Mammary epithelial cell (primary cell): ENCODE measurements at regions of chr6 and their contacts with region 1.

Region 1: DNA sequence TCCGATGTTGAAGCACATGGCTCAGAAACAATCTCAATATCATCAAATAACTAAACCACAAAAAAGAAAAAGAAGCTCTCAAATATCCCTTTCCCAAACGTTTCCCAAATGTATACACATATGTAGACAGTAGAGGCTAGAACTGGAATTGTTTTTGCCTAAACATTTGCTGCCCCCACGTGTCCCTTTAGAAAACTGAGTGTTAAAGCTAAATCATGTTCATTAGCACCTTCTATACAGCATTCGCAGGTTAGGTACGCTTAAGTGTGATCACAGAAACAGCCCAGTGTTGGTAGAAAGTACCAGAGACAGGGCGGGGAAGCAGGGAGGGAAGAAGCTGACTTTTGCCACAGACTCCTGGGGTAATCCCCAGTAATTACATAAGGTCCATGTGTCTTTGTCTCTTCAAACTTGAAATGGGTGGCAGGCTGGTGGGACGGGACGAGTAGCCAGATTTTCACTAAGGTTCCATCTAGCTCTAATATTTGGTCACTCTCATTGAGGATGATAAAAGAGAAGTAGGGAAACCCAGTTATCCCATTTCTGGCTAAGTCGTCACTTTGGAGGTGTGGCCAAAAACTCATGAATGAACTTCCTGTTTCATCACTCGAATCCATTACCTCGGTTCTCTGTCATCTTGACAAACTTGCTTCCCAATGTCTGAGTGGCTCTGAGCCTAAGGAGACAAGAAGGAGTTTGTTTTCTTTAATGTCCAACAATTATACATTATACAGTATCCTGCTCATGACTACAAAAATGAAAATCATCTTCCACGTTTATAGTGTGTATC is 15.0 kb upstream of the TFAP2A start:
- DNase-seq: peak; percentile 74
- H3K4me3 ChIP-seq: no peak overlapping the region
- H3K27ac ChIP-seq: peak overlapping the region; percentile 98
- H3K4me1 ChIP-seq: peaks cover 80% of the 10 kb centered on the region
- H3K27me3 ChIP-seq: no peaks in the 10 kb centered on the region
- CTCF ChIP-seq: peak; percentile 49 to 69

Region 2: GRCh38 chr6:8707956-8708772 is 1721.7 kb before region 1 on chr6:
- CTCF ChIA-PET with region 1: no interaction called
- dilution Hi-C with region 1: no loop called
- in situ Hi-C with region 1: no loop called
- intact Hi-C with region 1: loop called (anchors 10 kb)
- DNase-seq: peak; percentile 19
- H3K4me3 ChIP-seq: peak overlapping the region in 1 of 3 experiments; percentile 13
- H3K27ac ChIP-seq: no peak overlapping the region
- H3K4me1 ChIP-seq: no peaks in the 10 kb centered on the region
- H3K27me3 ChIP-seq: no peaks in the 10 kb centered on the region
- CTCF ChIP-seq: peak; percentile 17 to 48

Region 3: DNA sequence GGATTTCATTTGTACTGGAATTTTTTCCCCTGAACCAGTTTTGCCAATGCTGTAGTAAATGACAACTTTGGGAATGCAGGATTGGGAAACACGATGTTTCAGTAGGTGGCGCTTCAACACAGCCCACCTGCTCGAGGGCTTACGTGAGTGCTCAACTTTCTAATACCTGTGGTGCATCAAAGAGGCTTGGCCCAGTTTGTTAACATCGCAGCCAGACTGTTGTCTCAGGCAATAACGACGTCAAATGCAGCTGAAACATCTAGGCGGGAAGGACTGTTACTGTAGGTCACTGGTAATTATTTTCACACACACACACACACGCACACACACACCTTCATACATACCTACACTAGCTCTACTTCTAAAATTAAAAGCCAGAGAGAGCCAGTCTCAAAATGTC is 1179.0 kb before region 1 on chr6:
- CTCF ChIA-PET with region 1: no interaction called
- dilution Hi-C with region 1: no loop called
- in situ Hi-C with region 1: loop called (anchors 10 to 25 kb)
- intact Hi-C with region 1: loop called (anchors 1 kb)
- DNase-seq: peak; percentile 61
- H3K4me3 ChIP-seq: no peak overlapping the region
- H3K27ac ChIP-seq: no peak overlapping the region
- H3K4me1 ChIP-seq: no peaks in the 10 kb centered on the region
- H3K27me3 ChIP-seq: no peaks in the 10 kb centered on the region
- CTCF ChIP-seq: peak; percentile 72 to 85

Region 4: GRCh38 chr6:9851541-9852380 is 578.1 kb before region 1 on chr6:
- CTCF ChIA-PET with region 1: no interaction called
- dilution Hi-C with region 1: no loop called
- in situ Hi-C with region 1: no loop called
- intact Hi-C with region 1: loop called (anchors 5 kb)
- DNase-seq: peak; percentile 76
- H3K4me3 ChIP-seq: no peak overlapping the region
- H3K27ac ChIP-seq: peak overlapping the region; percentile 20
- H3K4me1 ChIP-seq: peaks cover 9% of the 10 kb centered on the region
- H3K27me3 ChIP-seq: no peaks in the 10 kb centered on the region
- CTCF ChIP-seq: peak; percentile 66 to 69

Region 5: GRCh38 chr6:10177703-10178102 is 252.1 kb before region 1 on chr6:
- CTCF ChIA-PET with region 1: no interaction called
- dilution Hi-C with region 1: no loop called
- in situ Hi-C with region 1: no loop called
- intact Hi-C with region 1: no loop called
- DNase-seq: peak; percentile 46
- H3K4me3 ChIP-seq: no peak overlapping the region
- H3K27ac ChIP-seq: no peak overlapping the region
- H3K4me1 ChIP-seq: peaks cover 20% of the 10 kb centered on the region
- H3K27me3 ChIP-seq: no peaks in the 10 kb centered on the region
- CTCF ChIP-seq: no peak

Region 6: DNA sequence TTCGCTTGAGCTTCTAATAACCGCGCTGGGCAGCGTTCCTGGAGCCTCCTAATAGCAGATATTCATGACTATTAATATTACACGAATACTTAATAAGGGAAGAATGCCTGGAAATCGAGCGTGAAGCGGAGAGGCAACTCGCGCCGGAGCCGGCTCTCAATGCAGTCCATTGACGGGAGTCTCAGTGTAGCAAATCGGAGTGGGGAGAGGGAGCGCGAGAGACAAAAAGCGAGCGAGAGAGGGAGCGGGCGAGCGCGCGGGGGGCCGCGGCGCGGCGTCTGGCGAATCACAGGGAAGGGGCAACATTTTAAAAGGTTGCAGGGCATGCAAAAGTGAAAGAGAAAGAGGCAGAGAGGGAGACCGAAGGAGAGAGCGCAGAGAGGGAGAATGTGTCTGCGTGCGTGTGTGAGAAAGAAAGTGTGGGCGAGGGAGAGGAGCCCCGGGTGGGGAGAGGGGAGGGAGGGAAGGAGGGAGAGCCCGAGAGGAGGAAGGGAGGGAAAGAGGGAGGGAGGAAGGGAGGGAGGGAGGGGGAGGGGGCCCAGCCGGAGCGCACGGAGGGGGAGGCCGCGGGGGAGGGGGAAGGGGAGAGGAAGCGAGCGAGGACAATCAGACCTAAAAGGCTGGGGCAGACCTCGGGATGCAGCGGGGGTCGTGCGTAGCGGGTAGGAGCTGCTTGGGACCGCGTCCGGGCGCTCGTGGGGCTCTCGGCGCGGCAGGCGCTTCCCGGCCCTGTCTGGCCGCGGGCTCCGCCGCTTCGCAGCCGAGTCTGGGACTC is 17.7 kb before region 1 on chr6:
- CTCF ChIA-PET with region 1: interaction called, 5 read pairs
- dilution Hi-C with region 1: no loop called
- in situ Hi-C with region 1: no loop called
- intact Hi-C with region 1: loop called (anchors 1 kb)
- DNase-seq: peak; percentile 92
- H3K4me3 ChIP-seq: peak overlapping the region; percentile 84 to 97 (median 96)
- H3K27ac ChIP-seq: peak overlapping the region; percentile 99
- H3K4me1 ChIP-seq: peaks cover 16% of the 10 kb centered on the region
- H3K27me3 ChIP-seq: no peaks in the 10 kb centered on the region
- CTCF ChIP-seq: no peak